Mammary epithelial cell (primary cell): ENCODE measurements at regions of chr6 and their contacts with region 1.

Region 1: GRCh38 chr6:39092124-39092523 is 22.9 kb downstream of the SAYSD1 start:
- DNase-seq: no peak
- H3K4me3 ChIP-seq: no peak overlapping the region
- H3K27ac ChIP-seq: no peak overlapping the region
- H3K4me1 ChIP-seq: no peaks in the 10 kb centered on the region
- H3K27me3 ChIP-seq: no peaks in the 10 kb centered on the region
- CTCF ChIP-seq: peak in 1 of 2 donors; percentile 40

Region 2: DNA sequence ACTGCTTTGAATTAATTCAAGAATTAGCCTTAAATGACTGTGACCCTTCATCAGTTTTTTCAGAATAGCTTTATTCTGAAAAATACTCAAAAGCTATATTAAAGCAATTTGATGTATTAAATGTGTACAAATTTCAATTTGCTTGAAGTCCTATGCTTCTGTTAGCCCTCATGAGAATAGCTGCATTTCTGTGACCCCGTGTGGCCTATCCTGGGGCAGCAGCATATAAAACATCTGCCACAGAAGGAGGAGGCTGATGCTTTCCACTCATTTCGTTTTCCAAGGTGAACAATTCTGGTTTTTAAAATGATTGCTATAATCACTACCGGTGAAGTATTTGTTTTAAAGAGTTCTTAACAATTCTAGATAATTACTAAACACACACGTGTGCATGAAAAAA is 812.7 kb before region 1 on chr6:
- CTCF ChIA-PET with region 1: no interaction called
- dilution Hi-C with region 1: no loop called
- in situ Hi-C with region 1: no loop called
- intact Hi-C with region 1: no loop called
- DNase-seq: no peak
- H3K4me3 ChIP-seq: no peak overlapping the region
- H3K27ac ChIP-seq: no peak overlapping the region
- H3K4me1 ChIP-seq: peaks cover 5% of the 10 kb centered on the region
- H3K27me3 ChIP-seq: no peaks in the 10 kb centered on the region
- CTCF ChIP-seq: peak in 1 of 2 donors; percentile 4

Region 3: GRCh38 chr6:38997128-38997761 is 94.9 kb before region 1 on chr6:
- CTCF ChIA-PET with region 1: interaction called, 4 read pairs
- dilution Hi-C with region 1: no loop called
- in situ Hi-C with region 1: loop called in 1 of 2 experiments (anchors 10 kb)
- intact Hi-C with region 1: loop called (anchors 1 kb)
- DNase-seq: peak; percentile 3
- H3K4me3 ChIP-seq: no peak overlapping the region
- H3K27ac ChIP-seq: no peak overlapping the region
- H3K4me1 ChIP-seq: no peaks in the 10 kb centered on the region
- H3K27me3 ChIP-seq: no peaks in the 10 kb centered on the region
- CTCF ChIP-seq: peak; percentile 69 to 77

Region 4: DNA sequence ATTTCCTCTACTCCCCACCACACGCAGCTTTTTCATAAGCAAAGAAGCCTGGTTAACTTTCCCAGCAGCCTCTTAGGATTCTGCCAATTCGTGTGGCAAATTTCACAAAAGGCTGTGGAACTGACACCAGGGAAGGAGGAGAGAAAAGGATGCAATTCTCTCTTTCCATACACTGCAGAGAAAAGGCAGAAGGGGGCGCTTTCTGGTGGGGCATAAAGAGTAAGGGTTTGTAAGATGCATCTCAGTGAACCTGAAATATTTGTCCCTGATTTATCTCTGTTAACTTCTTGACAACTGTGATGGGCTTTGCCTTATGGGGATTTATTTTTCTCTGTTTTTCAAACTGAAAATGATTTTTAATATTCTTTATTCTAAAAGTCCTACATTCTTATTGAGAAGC is 89.1 kb before region 1 on chr6:
- CTCF ChIA-PET with region 1: no interaction called
- dilution Hi-C with region 1: no loop called
- in situ Hi-C with region 1: loop called in 1 of 2 experiments (anchors 10 kb)
- intact Hi-C with region 1: loop called (anchors 1 kb)
- DNase-seq: peak; percentile 9
- H3K4me3 ChIP-seq: no peak overlapping the region
- H3K27ac ChIP-seq: no peak overlapping the region
- H3K4me1 ChIP-seq: no peaks in the 10 kb centered on the region
- H3K27me3 ChIP-seq: peaks cover 8% of the 10 kb centered on the region
- CTCF ChIP-seq: peak; percentile 42 to 61

Region 5: GRCh38 chr6:39128106-39128505 is 36.0 kb after region 1 on chr6:
- CTCF ChIA-PET with region 1: no interaction called
- dilution Hi-C with region 1: no loop called
- in situ Hi-C with region 1: no loop called
- intact Hi-C with region 1: no loop called
- DNase-seq: no peak
- H3K4me3 ChIP-seq: no peak overlapping the region
- H3K27ac ChIP-seq: no peak overlapping the region
- H3K4me1 ChIP-seq: no peaks in the 10 kb centered on the region
- H3K27me3 ChIP-seq: no peaks in the 10 kb centered on the region
- CTCF ChIP-seq: no peak

Region 6: DNA sequence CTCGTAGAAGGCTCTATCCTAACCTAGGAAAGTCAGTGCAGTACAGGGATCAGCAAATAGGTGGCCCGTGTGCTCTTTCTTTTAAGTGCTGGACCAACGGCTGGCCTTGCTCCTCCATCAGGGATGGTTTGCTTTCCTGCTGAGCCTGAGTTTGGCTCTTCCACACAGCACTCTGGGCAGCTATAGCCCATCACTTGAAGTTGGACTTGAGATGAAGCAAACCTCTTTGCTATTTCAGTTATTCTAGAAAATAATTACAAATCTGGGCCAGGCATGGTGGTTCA is 297.3 kb after region 1 on chr6:
- CTCF ChIA-PET with region 1: no interaction called
- dilution Hi-C with region 1: no loop called
- in situ Hi-C with region 1: no loop called
- intact Hi-C with region 1: no loop called
- DNase-seq: no peak
- H3K4me3 ChIP-seq: no peak overlapping the region
- H3K27ac ChIP-seq: no peak overlapping the region
- H3K4me1 ChIP-seq: no peaks in the 10 kb centered on the region
- H3K27me3 ChIP-seq: no peaks in the 10 kb centered on the region
- CTCF ChIP-seq: peak; percentile 29 to 30